ENCODE measurements at regions of chr2 and their contacts with region 1.

Region 1: DNA sequence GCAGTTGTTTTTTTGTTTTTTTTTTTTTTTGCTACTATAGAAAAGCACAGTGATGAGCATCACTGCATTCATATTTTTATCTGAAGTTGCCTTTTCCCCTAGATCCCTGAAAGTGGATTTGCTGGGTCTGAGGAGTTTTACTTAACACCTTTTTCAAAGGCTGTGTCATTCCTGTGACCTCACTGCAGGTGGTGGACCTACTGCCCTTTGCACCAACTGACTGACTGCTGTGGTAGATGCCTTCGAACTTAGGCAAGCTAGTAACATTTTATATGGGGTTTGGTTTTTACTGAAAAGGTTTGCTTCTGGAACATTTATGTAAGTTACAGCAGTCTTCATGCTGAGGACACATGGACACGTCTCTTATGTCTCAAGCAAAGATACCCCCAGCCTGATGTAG is 36.2 kb downstream of the SPTBN1 start:
- DNase-seq: no peak
- H3K4me3 ChIP-seq: no peak overlapping the region
- H3K27me3 ChIP-seq: no peaks in the 10 kb centered on the region
- CTCF ChIP-seq: no peak

Region 2: GRCh38 chr2:54503192-54503591 is 10.9 kb after region 1 on chr2:
- CTCF ChIA-PET with region 1: interaction called, 18 read pairs
- POLR2A ChIA-PET with region 1: no interaction called
- DNase-seq: no peak
- H3K4me3 ChIP-seq: no peak overlapping the region
- H3K27me3 ChIP-seq: no peaks in the 10 kb centered on the region
- CTCF ChIP-seq: peak; percentile 39; the same call in 1 of the 2 replicates

Measured in BJ (cell line).